ENCODE measurements at regions of chr9 and their contacts with region 1.

Region 1: GRCh38 chr9:38620483-38621433 is at the start of gene ANKRD18A:
- DNase-seq: peak; percentile 92
- ATAC-seq: peak; percentile 69
- H3K4me3 ChIP-seq: peak within 1 kb of the TSS; percentile 82
- H3K27ac ChIP-seq: peak within 1 kb of the TSS; percentile 72
- H3K4me1 ChIP-seq: peaks cover 4% of the 10 kb centered on the region; the same call in 1 of the 2 replicates
- H3K27me3 ChIP-seq: no peaks in the 10 kb centered on the region
- CTCF ChIP-seq: peak; percentile 59
- total RNA-seq, gene ANKRD18A: 2.2 and 3.4 TPM in 2 replicates

Region 2: DNA sequence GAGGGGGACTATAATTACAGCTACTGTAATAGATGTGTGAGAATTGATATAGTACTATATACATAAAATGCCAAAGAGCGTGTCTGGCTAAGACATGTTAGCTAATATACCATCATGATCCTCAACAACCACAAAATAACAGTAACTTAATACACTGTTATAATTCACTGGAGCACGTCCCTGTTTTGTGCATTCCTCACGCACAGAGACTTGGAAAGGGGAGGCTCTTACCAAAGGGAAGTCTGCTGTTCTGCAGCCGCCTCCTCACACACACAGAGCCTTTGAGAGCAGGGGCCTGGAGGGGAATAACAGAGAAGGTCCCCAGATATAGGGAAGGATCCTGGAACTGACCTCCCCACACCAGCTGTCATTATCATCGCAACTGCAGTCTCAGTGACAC is 97.6 kb before region 1 on chr9:
- CTCF ChIA-PET with region 1: no interaction called
- POLR2A ChIA-PET with region 1: interaction called, 10 read pairs
- intact Hi-C with region 1: no loop called
- DNase-seq: no peak
- ATAC-seq: no peak
- H3K4me3 ChIP-seq: no peak overlapping the region
- H3K27ac ChIP-seq: no peak overlapping the region
- H3K4me1 ChIP-seq: no peaks in the 10 kb centered on the region
- H3K27me3 ChIP-seq: no peaks in the 10 kb centered on the region
- CTCF ChIP-seq: no peak

Region 3: DNA sequence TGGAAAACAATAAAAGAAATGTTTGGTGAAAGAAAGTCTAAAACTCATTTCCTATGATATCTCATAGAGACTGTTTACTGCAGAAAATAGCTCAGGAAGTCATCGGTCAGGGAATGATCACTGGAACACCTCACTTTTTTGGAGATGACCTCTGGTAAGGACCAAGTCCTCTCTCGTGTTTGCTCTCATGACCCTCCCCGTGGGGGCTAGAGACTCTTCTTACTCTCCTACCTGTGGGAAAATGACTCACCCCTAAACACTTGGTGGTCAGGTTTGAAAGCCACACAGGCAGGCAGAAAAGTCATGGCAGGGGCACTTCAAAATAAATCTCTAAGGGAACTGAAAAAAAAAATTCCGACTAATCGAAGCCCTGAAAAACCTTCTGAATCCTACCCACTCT is 51.0 kb after region 1 on chr9:
- CTCF ChIA-PET with region 1: no interaction called
- POLR2A ChIA-PET with region 1: no interaction called
- intact Hi-C with region 1: loop called (anchors 10 kb)
- DNase-seq: no peak
- ATAC-seq: no peak
- H3K4me3 ChIP-seq: peak overlapping the region; percentile 39; the same call in 1 of the 2 replicates
- H3K27ac ChIP-seq: no peak overlapping the region
- H3K4me1 ChIP-seq: peaks cover 8% of the 10 kb centered on the region
- H3K27me3 ChIP-seq: no peaks in the 10 kb centered on the region
- CTCF ChIP-seq: no peak

Measured in PC-3 (cell line).